ENCODE measurements at regions of chr2 and their contacts with region 1.

Region 1: DNA sequence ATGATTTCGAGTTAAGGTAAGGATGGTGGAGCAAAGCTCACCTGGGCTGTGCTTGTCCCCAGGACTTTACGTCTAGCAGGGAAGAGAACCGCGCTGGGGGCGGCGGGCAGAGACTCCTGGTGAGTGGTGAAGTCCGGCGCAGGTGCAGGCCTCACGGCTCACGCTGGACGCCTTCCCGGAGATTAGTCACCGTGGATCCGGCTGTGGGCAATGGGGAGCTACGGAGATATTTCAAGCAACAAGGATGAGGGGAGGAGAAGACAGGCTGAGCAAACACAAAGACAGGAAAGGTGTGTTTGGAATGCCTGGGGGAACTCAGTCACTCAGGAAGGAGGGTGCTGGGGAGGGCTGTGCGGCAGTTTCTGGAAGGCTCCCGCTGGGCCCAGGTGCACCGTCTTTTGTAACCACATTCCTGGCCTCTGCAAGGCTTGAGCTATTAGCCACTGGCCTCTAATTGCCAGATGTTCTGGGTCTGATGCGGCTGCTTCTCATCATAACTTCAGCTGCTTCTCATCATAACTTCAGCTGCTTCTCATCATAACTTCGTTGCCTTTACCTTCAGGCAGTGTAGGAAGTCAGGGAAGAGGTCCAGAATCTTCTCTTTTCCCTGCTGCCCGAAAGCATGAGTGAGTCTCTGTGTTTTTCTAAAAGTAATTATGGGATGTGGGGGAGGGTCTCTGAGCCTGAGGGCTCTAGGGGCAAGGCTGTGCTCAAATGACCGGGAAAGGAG is 118.9 kb downstream of the PXDN start:
- DNase-seq: peak; percentile 98
- ATAC-seq: peak; percentile 92
- H3K4me3 ChIP-seq: peak overlapping the region; percentile 60
- H3K27ac ChIP-seq: peak overlapping the region; percentile 96
- H3K4me1 ChIP-seq: peaks cover 53% of the 10 kb centered on the region
- H3K27me3 ChIP-seq: no peaks in the 10 kb centered on the region
- CTCF ChIP-seq: no peak

Region 2: DNA sequence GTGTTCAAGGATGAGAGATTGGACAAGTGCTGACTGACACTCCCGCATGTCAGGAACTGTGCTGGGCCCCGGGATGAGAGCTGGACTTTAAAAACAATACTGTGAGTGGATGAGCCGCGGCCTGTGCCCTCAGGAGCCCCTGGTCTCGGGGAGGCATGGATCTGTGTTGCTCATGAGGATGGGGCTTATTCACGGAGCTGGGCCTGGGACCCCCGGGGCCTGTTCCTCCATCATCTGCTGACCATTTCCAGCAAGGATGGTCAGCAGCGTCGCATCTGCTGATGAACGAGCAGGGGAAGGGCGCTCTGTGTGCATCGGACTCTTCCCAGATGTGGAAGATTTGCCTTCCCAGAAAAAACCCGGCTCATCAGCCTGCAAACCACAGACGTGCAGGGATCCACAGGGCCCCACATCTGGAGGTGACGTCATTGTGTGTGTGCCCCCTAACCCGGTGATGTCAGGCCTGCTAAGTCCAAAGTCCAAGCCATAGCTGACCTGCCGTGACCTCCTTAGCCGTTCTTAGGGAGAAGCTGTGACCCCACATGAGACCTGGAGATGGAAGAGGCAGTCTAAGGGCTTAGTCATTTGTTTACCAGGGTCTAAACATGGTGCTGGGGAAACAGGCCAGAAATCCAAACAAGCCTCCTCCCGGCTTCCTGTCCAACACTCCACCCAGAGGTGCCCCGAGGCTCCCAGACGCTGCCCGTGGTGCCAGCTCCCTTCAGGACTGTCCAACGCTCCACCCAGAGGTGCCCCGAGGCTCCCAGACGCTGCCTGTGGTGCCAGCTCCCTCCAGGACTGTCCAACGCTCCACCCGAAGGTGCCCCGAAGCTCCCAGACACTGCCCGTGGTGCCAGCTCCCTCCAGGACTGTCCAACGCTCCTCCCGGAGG is 24.9 kb before region 1 on chr2:
- CTCF ChIA-PET with region 1: no interaction called
- POLR2A ChIA-PET with region 1: no interaction called
- intact Hi-C with region 1: loop called (anchors 2 kb)
- DNase-seq: peak; percentile 85
- ATAC-seq: peak; percentile 86
- H3K4me3 ChIP-seq: peak overlapping the region; percentile 36
- H3K27ac ChIP-seq: peak overlapping the region; percentile 83
- H3K4me1 ChIP-seq: peaks cover 21% of the 10 kb centered on the region
- H3K27me3 ChIP-seq: no peaks in the 10 kb centered on the region
- CTCF ChIP-seq: no peak

Region 3: GRCh38 chr2:1736997-1737480 is 111.7 kb after region 1 on chr2:
- CTCF ChIA-PET with region 1: no interaction called
- POLR2A ChIA-PET with region 1: interaction called, 5 read pairs
- intact Hi-C with region 1: loop called (anchors 2 kb)
- DNase-seq: peak; percentile 92
- ATAC-seq: peak; percentile 87
- H3K4me3 ChIP-seq: peak overlapping the region; percentile 58
- H3K27ac ChIP-seq: peak overlapping the region; percentile 96
- H3K4me1 ChIP-seq: peaks cover 66% of the 10 kb centered on the region
- H3K27me3 ChIP-seq: no peaks in the 10 kb centered on the region
- CTCF ChIP-seq: no peak